Activated B cell treated with CpG ODN at 0.5 μM for 24 hours (primary cell): ENCODE measurements at regions of chr16 and their contacts with region 1.

Region 1: GRCh38 chr16:11851294-11852091 is at the start of gene RSL1D1:
- DNase-seq: peak; percentile 98
- ATAC-seq: peak; percentile 78
- H3K4me3 Mint-ChIP-seq: peak within 1 kb of the TSS; percentile 98
- H3K27ac Mint-ChIP-seq: peak within 1 kb of the TSS; percentile 91
- H3K4me1 Mint-ChIP-seq: peaks cover 51% of the 10 kb centered on the region
- H3K27me3 Mint-ChIP-seq: no peaks in the 10 kb centered on the region
- CTCF ChIP-seq: no peak
- total RNA-seq, gene RSL1D1: 224 and 265 TPM in 2 replicates

Region 2: GRCh38 chr16:11510178-11510973 is 341.1 kb before region 1 on chr16:
- CTCF ChIA-PET with region 1: no interaction called
- POLR2A ChIA-PET with region 1: no interaction called
- intact Hi-C with region 1: no loop called
- DNase-seq: no peak
- ATAC-seq: no peak
- H3K4me3 Mint-ChIP-seq: no peak overlapping the region
- H3K27ac Mint-ChIP-seq: no peak overlapping the region
- H3K4me1 Mint-ChIP-seq: peaks cover 13% of the 10 kb centered on the region
- H3K27me3 Mint-ChIP-seq: no peaks in the 10 kb centered on the region
- CTCF ChIP-seq: no peak

Region 3: GRCh38 chr16:11742539-11743307 is 108.8 kb before region 1 on chr16 and contains the start of gene TXNDC11:
- CTCF ChIA-PET with region 1: no interaction called
- POLR2A ChIA-PET with region 1: interaction called, 17 read pairs
- intact Hi-C with region 1: loop called (anchors 1 kb)
- DNase-seq: peak; percentile 100
- ATAC-seq: peak; percentile 91
- H3K4me3 Mint-ChIP-seq: peak within 1 kb of the TSS; percentile 89
- H3K27ac Mint-ChIP-seq: peak within 1 kb of the TSS; percentile 89
- H3K4me1 Mint-ChIP-seq: peaks cover 58% of the 10 kb centered on the region
- H3K27me3 Mint-ChIP-seq: no peaks in the 10 kb centered on the region
- CTCF ChIP-seq: no peak
- total RNA-seq, gene TXNDC11: 54.3 and 63.2 TPM in 2 replicates

Region 4: DNA sequence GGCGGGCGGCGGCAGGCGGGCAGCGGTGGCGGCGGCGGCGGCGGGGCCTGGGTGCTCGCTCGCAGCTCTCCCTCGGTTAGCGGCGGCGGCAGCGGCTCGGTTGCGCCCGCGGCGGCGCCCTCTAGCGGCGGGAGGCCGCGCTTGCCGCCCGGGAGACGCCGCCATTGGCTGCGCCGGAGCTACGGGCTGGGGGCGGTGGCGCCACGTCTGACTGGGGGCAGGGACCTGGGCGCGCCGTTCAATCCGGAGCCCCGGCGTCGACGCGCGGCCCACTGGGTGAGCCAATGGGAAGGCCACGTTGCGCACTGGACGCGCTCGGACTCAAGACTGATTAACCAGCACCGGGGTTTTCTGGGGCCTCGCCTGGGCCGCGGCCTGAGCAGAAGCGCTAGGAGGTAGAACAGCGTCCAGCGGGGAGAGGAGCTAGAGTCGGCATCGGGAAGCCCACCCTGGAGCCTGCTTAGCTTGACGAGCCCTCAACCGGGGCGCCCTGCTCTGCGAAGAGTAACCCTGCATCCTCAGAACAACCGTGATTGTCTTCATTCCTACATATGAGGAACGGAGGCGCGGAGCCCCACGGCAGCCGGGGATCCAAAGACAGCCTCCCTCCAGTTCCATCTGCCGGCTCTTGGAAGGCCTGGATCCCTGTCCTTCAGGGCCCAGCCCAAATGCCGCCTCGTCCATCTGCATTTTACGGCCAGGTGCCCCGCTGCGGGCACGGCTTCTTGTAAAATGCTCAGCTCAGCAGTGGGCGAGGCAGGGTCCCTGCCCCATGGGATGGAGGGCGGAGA is 54.1 kb before region 1 on chr16 and contains the start of gene ZC3H7A:
- CTCF ChIA-PET with region 1: no interaction called
- POLR2A ChIA-PET with region 1: interaction called, 10 read pairs
- intact Hi-C with region 1: loop called (anchors 1 kb)
- DNase-seq: peak; percentile 94
- ATAC-seq: peak; percentile 97
- H3K4me3 Mint-ChIP-seq: peak within 1 kb of the TSS; percentile 95
- H3K27ac Mint-ChIP-seq: peak within 1 kb of the TSS; percentile 96
- H3K4me1 Mint-ChIP-seq: peaks cover 73% of the 10 kb centered on the region
- H3K27me3 Mint-ChIP-seq: no peaks in the 10 kb centered on the region
- CTCF ChIP-seq: no peak
- total RNA-seq, gene ZC3H7A: 143 and 163 TPM in 2 replicates

Region 5: GRCh38 chr16:11977376-11978041 is 126.0 kb after region 1 on chr16:
- CTCF ChIA-PET with region 1: no interaction called
- POLR2A ChIA-PET with region 1: no interaction called
- intact Hi-C with region 1: loop called (anchors 2 kb)
- DNase-seq: no peak
- ATAC-seq: no peak
- H3K4me3 Mint-ChIP-seq: peak overlapping the region; percentile 96
- H3K27ac Mint-ChIP-seq: peak overlapping the region; percentile 77
- H3K4me1 Mint-ChIP-seq: peaks cover 65% of the 10 kb centered on the region
- H3K27me3 Mint-ChIP-seq: no peaks in the 10 kb centered on the region
- CTCF ChIP-seq: no peak

Region 6: DNA sequence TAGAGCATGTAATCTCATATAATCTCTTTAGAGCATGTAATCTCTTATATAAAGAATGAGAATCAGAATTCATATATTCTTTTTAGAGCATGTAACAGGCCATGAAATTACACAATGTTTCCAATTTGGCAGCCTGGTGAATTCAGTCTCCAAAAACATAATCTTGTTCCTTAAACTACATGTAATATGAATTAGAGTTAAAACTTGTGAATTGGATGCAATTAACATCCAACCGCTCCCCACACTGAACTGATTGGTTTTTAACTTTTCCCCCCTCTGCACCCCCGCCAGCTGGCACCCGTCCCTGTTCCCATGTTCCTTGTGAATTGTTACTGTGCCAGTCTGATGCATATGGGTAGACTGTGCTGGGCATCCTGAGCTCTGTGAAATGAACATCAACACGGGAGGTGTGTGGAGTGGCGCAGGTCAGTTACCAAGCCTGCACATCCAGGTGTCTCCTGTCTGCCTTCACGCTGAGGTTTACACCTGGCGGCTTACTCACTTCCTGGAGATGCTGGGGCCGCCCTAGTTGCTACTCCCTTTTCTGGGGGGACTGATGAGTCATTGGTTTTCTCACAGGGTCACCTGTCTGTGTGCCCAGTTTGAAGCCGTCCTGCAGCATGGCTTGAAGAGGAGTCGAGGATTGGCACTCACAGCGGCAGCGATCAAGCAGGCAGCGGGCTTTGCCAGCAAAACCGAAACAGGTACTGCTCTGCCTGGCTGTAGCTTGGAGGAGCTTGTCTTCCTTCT is 175.4 kb after region 1 on chr16:
- CTCF ChIA-PET with region 1: no interaction called
- POLR2A ChIA-PET with region 1: no interaction called
- intact Hi-C with region 1: no loop called
- DNase-seq: no peak
- ATAC-seq: no peak
- H3K4me3 Mint-ChIP-seq: no peak overlapping the region
- H3K27ac Mint-ChIP-seq: peak overlapping the region; percentile 57
- H3K4me1 Mint-ChIP-seq: peaks cover 71% of the 10 kb centered on the region
- H3K27me3 Mint-ChIP-seq: no peaks in the 10 kb centered on the region
- CTCF ChIP-seq: no peak